ENCODE measurements at regions of chr17 and their contacts with region 1.

Region 1: GRCh38 chr17:49575579-49576087 is at the start of gene NXPH3:
- DNase-seq: no peak
- H3K4me3 ChIP-seq: peak within 1 kb of the TSS; percentile 72
- H3K27me3 ChIP-seq: peaks cover under 1% of the 10 kb centered on the region; the same call in 1 of the 2 replicates
- CTCF ChIP-seq: peak; percentile 24; the same call in 1 of the 2 replicates
- polyA plus RNA-seq, gene NXPH3: 5.0 and 9.3 TPM in 2 replicates

Region 2: DNA sequence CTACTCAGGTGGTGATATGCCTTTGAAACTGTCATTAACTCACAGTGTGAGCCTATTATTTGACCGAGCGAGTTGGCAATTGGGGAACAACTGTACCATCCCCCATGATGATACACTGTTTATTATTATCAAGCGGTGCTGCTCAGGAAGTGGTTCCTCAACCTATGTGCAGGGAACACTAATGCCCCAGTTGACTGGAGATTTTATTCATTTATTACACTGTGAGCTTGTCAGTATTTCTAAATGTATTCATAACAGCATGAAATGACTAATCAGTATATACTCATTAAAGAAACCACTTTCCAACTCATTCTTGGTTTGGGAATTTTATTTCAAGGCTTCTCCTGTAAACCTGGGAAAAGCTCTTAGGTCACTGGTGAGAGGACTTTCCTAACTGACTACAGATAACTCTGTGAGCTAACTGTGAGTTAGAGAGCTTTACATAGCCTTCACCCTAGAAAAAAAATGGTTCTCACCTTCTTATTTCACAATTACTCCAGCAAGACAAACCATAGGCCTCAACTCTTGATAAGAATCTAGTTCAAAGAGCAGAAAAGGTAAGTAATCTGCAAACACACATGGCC is 42.5 kb after region 1 on chr17:
- CTCF ChIA-PET with region 1: interaction called, 6 read pairs
- POLR2A ChIA-PET with region 1: interaction called, 10 read pairs
- DNase-seq: no peak
- H3K4me3 ChIP-seq: no peak overlapping the region
- H3K27me3 ChIP-seq: no peaks in the 10 kb centered on the region
- CTCF ChIP-seq: no peak

Region 3: GRCh38 chr17:49670002-49670401 is 94.4 kb after region 1 on chr17:
- CTCF ChIA-PET with region 1: interaction called, 10 read pairs
- POLR2A ChIA-PET with region 1: no interaction called
- DNase-seq: no peak
- H3K4me3 ChIP-seq: no peak overlapping the region
- H3K27me3 ChIP-seq: no peaks in the 10 kb centered on the region
- CTCF ChIP-seq: no peak

Region 4: GRCh38 chr17:49677933-49678847 is 102.6 kb after region 1 on chr17 and contains the start of gene SPOP:
- CTCF ChIA-PET with region 1: interaction called, 15 read pairs
- POLR2A ChIA-PET with region 1: no interaction called
- DNase-seq: peak; percentile 93
- H3K4me3 ChIP-seq: peak within 1 kb of the TSS; percentile 95
- H3K27me3 ChIP-seq: 0 out of 2 replicates have a peak, but pooled peaks cover 2% of the 10 kb centered on the region
- CTCF ChIP-seq: no peak
- polyA plus RNA-seq, gene SPOP: 86.4 and 136 TPM in 2 replicates

Region 5: GRCh38 chr17:49707608-49708514 is 132.2 kb after region 1 on chr17 and contains the start of gene SLC35B1:
- CTCF ChIA-PET with region 1: interaction called, 638 read pairs
- POLR2A ChIA-PET with region 1: interaction called, 21 read pairs
- DNase-seq: peak; percentile 98
- H3K4me3 ChIP-seq: peak within 1 kb of the TSS; percentile 92
- H3K27me3 ChIP-seq: no peaks in the 10 kb centered on the region
- CTCF ChIP-seq: peak; percentile 95
- polyA plus RNA-seq, gene SLC35B1: 116 and 120 TPM in 2 replicates

Region 6: DNA sequence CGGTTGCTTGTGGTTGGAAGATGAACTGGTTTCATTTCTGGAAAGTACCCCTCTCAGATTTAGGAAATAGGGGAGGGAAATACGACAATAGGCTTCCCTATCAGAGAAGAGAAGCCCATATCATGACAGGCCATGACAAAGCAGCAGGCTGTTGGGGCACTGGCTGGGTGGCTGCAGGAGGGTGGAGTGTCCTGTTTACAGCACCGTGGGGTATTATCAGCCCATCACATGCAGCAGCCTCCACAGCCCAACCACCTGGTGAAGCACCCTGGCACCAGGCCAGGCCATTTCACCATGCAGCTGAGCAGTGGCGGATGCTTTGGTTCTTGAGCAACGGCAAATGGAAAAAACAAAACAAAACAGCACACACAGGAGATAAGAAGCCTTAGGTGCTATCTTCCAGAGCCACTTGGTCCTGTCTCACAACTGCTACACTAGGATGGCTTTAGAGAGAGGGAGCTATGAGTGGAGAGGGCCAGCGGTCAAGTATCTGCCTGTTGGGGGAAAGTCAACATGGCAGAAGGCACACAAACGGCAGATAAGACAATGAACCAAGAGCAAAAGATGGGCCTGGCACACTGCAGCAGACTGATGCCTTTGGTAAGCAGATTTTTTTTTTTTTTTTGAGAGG is 164.1 kb after region 1 on chr17:
- CTCF ChIA-PET with region 1: no interaction called
- POLR2A ChIA-PET with region 1: no interaction called
- DNase-seq: no peak
- H3K4me3 ChIP-seq: no peak overlapping the region
- H3K27me3 ChIP-seq: no peaks in the 10 kb centered on the region; the same call in 1 of the 2 replicates
- CTCF ChIP-seq: no peak